ENCODE measurements at regions of chr7 and their contacts with region 1.

Region 1: GRCh38 chr7:151057989-151058780 is 488 bp upstream of the CDK5 start:
- DNase-seq: peak; percentile 98 to 100 (median 99)
- ATAC-seq: peak; percentile 88 to 93 (median 91)
- H3K4me3 ChIP-seq: peak overlapping the region in 11 of 12 donors; percentile 68 to 100 (median 92)
- H3K27ac ChIP-seq: peak overlapping the region; percentile 90 to 99 (median 98)
- H3K4me1 ChIP-seq: peaks cover 9 to 53% (median 46%) of the 10 kb centered on the region in 12 donors
- H3K27me3 ChIP-seq: no peaks in the 10 kb centered on the region
- CTCF ChIP-seq: peak in 1 of 12 donors; percentile 8
- POLR2A ChIP-seq: peak; percentile 68 to 97

Region 2: DNA sequence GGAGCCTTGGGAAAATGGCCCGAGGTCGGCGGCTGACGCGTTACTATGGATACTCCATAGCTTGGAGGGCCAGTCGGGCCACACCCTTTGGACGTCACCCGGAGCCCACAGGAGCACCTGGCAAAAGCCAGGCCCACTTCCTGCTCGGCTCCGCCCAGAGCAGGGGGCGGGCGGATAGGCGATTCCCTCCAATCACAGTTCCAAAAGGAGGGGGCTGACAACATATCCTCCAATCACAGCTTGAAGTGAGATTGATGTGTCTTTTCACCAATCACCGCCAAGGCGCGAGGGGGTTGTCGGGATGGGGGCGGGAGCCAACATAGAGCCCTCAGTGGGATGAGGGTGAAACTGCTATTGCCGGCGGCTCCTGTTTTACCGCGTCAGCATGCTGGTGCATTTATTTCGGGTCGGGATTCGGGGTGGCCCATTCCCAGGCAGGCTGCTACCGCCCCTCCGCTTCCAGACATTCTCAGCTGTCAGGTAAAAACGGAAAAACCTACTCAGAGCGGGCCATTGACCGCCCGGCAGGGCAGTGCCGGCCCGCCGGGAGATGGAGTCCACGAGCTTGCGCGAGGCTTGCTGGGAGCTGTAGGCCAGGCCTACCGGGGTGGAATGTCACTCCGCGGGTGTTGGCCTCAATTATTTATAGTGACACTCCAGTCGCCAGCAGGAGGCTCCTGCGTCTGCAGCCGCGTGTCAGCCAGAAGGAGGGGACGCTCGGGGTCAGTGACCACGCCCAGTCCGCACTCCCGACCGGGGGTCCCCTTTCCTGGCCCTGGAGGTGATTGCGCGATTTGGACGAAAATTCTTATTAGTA is 29.8 kb before region 1 on chr7 and contains the start of gene ABCB8:
- intact Hi-C with region 1: loop called in 4 of 10 experiments (anchors 1 to 2 kb)
- DNase-seq: peak; percentile 96 to 99 (median 98)
- ATAC-seq: peak; percentile 96 to 98 (median 96)
- H3K4me3 ChIP-seq: peak within 1 kb of the TSS; percentile 62 to 91 (median 76)
- H3K27ac ChIP-seq: peak within 1 kb of the TSS; percentile 15 to 90 (median 85)
- H3K4me1 ChIP-seq: peaks cover 0 to 22% (median 15%) of the 10 kb centered on the region in 12 donors
- H3K27me3 ChIP-seq: peaks cover 0 to 4% (median 0%) of the 10 kb centered on the region in 9 donors
- CTCF ChIP-seq: peak; percentile 43 to 77 (median 60)
- POLR2A ChIP-seq: peak in 1 of 2 donors; percentile 74
- total RNA-seq, gene ABCB8: 13.6 to 34.5 (median 26.0) TPM

Region 3: DNA sequence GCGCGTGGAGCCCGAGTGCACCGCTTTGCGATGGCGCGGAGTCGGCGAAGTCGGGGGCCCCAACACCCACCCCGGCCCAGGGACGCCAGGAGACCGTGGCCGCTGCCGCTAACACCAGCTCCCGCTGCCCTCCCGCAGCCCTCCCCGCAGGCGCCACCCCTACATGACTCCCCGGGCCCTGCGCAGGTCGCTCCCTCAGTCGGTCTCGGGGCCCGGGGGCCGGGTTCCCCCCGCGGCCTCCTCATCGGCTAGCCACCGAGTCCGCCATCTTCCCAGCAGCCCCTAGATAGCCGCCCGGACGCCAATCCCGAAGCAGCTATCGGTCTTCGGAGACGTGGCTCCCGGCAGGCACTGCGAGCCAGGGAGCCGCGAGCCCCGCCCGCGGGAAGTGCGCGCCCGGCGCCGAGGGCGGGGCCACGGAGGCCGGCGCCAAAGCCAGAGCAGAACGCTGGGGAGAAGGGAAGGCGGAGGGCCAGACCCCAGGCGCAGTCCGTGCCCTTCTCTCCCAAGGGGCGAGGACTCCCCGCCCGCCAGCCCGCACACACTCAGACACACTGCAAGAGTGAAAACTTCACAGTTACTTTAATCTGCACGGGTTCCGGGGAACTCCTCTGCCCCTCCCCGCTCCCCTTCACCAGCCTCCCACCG is 22.5 kb after region 1 on chr7 and contains the start of gene FASTK:
- intact Hi-C with region 1: loop called in 5 of 10 experiments (anchors 1 to 2 kb)
- DNase-seq: peak; percentile 92 to 96 (median 94)
- ATAC-seq: peak; percentile 78 to 84 (median 82)
- H3K4me3 ChIP-seq: peak within 1 kb of the TSS; percentile 72 to 99 (median 94)
- H3K27ac ChIP-seq: peak within 1 kb of the TSS; percentile 85 to 99 (median 94)
- H3K4me1 ChIP-seq: peaks cover 20 to 76% (median 59%) of the 10 kb centered on the region in 12 donors
- H3K27me3 ChIP-seq: no peaks in the 10 kb centered on the region
- CTCF ChIP-seq: no peak
- POLR2A ChIP-seq: peak in 1 of 2 donors; percentile 86
- total RNA-seq, gene FASTK: 59.9 to 124 (median 77.7) TPM

Region 4: DNA sequence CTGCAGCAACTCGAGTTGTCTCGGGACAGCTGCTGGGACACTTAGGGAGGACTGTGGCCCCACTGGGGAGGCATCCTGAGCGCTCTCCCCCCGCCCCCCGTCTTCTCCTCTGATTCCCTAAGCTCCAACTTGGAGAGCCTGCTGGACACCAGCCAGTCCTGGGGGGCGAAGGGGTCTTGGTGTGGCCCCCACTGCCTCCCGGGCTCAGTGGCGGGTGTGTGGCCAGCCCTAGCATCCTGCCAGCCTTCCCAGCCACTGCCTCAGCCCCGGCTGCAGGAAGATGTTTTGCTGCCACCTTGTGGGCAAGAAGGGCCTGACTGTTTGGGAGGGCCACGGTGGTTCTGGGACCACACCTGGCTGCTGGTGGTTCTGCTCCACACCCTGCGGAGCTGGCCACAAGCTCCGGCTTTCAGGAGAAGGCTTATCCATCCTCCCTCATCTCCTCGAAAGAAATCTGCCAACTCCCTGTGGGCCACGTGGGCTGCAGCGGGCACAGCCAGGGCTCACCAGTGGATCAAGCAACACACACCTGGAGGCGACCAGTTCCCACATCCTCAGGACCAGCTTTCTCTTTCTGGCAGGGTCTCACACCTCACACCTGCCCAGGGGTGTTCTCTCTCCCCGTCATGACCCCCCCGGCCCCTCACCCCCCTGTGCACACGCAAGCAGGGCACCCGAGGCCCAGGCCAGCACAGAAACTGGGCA is 52.9 kb after region 1 on chr7:
- intact Hi-C with region 1: loop called in 1 of 10 experiments (anchors 10 kb)
- DNase-seq: peak; percentile 75 to 88 (median 82)
- ATAC-seq: peak; percentile 71 to 88 (median 78)
- H3K4me3 ChIP-seq: no peak overlapping the region
- H3K27ac ChIP-seq: no peak overlapping the region
- H3K4me1 ChIP-seq: peaks cover 0 to 41% (median 23%) of the 10 kb centered on the region in 12 donors
- H3K27me3 ChIP-seq: peaks cover 0 to 5% (median 0%) of the 10 kb centered on the region in 9 donors
- CTCF ChIP-seq: peak; percentile 85 to 96 (median 90)
- POLR2A ChIP-seq: no peak

Region 5: DNA sequence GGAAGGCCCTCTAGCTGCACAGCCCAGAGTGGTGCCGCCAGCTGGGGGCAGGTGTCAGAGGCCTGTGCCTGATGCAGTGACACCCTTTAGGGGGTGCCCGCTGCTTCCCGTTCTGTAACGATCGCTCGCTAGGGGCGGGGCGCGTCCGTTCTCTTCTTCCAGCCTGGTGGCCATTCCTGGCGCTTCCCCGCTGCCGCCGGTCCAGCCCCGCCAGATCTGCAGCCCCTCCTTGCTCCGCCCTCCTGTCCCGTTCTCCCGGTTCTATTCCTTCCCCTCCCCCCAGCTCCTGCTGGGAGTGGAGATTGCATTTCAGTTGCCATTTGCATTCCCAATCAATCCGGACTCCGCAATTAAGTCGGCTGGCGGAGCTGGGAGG is 67.3 kb after region 1 on chr7:
- intact Hi-C with region 1: no loop called
- DNase-seq: peak in 4 of 5 donors; percentile 53 to 78 (median 62)
- ATAC-seq: peak; percentile 37 to 66 (median 60)
- H3K4me3 ChIP-seq: peak overlapping the region; percentile 37 to 63 (median 55)
- H3K27ac ChIP-seq: peak overlapping the region in 7 of 12 donors; percentile 15 to 62 (median 32)
- H3K4me1 ChIP-seq: peaks cover 0 to 32% (median 9%) of the 10 kb centered on the region in 12 donors
- H3K27me3 ChIP-seq: no peaks in the 10 kb centered on the region
- CTCF ChIP-seq: peak in 8 of 12 donors; percentile 8 to 53 (median 36)
- POLR2A ChIP-seq: no peak

Region 6: DNA sequence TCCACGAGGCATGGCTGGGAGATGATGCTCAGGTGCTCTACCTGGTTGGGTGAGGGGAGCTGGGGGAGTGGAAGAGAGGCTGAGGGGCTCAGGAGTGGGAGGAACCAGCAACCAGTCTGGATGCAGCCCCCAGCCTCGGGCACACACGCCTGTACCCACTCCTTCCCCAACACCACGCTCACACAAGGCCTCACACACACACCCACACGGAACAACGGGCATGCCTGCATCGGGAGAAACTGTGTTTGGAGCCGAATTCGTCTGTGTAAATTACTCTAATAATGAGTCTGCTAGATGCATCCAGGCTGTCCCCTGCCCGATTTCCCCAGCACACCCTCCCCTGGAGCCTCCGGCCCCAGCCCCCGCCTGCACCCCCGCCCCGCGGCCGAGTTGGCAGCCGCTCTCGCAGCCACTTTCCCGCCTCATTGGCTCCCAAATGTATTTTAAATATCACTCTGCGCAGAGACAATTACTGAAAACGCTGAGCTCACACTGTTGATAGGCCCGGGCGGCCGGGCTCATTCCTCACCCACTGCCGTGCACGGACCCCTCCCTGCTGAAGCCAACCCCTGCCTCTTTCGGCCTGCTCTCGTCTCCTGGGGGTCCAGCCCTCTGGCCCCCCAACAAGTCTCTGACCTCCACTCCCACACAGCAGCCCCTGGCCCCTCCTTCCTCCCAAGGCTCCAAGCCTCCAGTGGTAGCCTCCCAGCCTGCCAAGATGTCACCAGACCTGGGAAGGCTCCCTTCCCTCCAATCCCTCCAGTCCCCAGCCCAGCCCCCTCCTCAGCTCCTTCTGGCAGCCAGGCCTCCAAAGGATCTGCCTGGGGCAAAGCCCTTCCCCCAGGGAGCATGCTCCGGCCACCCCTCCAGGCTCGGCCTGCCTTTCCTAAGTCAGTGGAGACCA is 141.0 kb after region 1 on chr7:
- intact Hi-C with region 1: no loop called
- DNase-seq: no peak
- ATAC-seq: no peak
- H3K4me3 ChIP-seq: no peak overlapping the region
- H3K27ac ChIP-seq: no peak overlapping the region
- H3K4me1 ChIP-seq: no peaks in the 10 kb centered on the region
- H3K27me3 ChIP-seq: peaks cover 0 to 28% (median 4%) of the 10 kb centered on the region in 9 donors
- CTCF ChIP-seq: no peak
- POLR2A ChIP-seq: no peak

Measured in heart left ventricle (tissue), 16 donors.